ENCODE measurements at regions of chr2 and their contacts with region 1.

Region 1: DNA sequence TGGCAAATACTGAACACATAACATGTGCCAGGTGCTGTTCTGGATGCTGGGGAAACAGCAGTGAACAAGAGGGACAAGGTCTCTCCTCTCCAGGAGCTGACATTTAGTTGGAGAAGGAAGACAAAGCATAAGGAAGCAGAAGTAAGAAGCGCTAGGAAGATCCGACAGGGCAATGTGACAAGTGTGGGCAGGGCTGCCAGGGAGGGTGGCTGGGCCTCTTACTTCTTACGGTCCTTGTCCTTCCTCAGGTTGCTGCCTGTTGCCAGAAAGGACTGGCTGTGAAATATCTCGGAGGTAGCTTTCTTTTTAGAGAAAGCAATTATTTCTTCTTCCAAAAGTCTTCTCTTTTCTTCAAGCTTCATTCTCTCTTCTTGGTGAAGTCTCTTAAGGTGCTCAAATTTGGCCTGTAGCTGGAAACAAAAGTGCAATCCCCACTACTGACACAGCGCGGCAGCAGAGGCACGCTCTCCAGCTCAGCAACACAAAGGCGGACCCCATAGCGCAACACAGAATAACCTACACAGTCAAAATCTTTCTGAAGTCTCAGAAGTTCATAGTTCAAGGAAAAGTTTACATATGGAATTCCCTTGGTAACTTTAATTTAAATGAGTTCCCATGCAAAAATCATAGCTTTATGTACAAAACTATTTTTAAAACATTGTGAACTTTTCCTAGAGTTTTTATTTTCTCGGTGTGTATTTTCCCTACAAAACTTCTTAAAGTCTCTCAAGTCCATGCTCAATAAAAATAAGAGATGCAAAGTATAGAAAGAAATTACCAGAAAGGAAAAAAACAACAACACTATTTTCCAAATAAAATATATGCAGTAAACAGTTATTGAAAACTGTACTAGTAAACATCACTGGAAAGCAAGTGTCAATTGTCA is 67.7 kb downstream of the SEPTIN10 start:
- DNase-seq: peak; percentile 71
- H3K4me3 Mint-ChIP-seq: no peak overlapping the region
- H3K27ac Mint-ChIP-seq: no peak overlapping the region
- H3K4me1 Mint-ChIP-seq: no peaks in the 10 kb centered on the region
- H3K27me3 Mint-ChIP-seq: no peaks in the 10 kb centered on the region

Region 2: GRCh38 chr2:109558076-109558882 is 12.2 kb after region 1 on chr2:
- CTCF ChIA-PET with region 1: interaction called, 28 read pairs
- intact Hi-C with region 1: no loop called
- DNase-seq: peak; percentile 19
- H3K4me3 Mint-ChIP-seq: no peak overlapping the region
- H3K27ac Mint-ChIP-seq: no peak overlapping the region
- H3K4me1 Mint-ChIP-seq: peaks cover 6% of the 10 kb centered on the region
- H3K27me3 Mint-ChIP-seq: no peaks in the 10 kb centered on the region

Region 3: GRCh38 chr2:109613922-109614714 is 68.0 kb after region 1 on chr2 and contains the starts of genes SEPTIN10 and SOWAHC:
- CTCF ChIA-PET with region 1: interaction called, 5 read pairs
- intact Hi-C with region 1: loop called (anchors 10 kb)
- DNase-seq: peak; percentile 86
- H3K4me3 Mint-ChIP-seq: peak within 1 kb of the TSS; percentile 89
- H3K27ac Mint-ChIP-seq: no peak within 1 kb of the TSS
- H3K4me1 Mint-ChIP-seq: peaks cover 20% of the 10 kb centered on the region
- H3K27me3 Mint-ChIP-seq: peaks cover 64% of the 10 kb centered on the region
- total RNA-seq, gene SEPTIN10: 2.3 to 2.7 TPM
- total RNA-seq, gene SOWAHC: 0.38 to 0.44 TPM

Region 4: DNA sequence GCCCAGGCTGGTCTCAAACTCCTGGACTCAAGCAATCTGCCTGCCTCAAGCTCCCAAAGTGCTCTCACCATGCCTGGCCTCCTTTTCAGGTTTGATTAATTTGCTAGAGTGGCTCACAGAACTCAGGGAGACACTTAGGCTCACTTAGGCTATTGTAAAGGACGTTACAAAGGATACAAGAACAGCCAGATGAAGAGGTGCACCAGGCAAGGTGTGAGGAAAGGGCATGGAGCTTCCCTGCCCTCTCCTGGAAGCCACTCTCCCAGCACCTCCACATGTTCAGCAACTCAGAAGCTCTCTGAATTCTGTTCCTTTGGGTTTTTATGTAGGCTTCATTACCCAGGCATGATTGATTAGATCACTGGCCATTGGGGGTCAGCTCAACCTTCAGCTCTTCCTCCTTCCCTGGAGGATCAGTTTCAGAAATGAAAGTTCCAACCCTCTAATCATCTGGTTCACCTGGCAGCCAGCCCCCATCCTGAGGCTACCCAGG is 169.3 kb after region 1 on chr2:
- CTCF ChIA-PET with region 1: interaction called, 8 read pairs
- intact Hi-C with region 1: loop called (anchors 1 kb)
- DNase-seq: peak; percentile 14
- H3K4me3 Mint-ChIP-seq: no peak overlapping the region
- H3K27ac Mint-ChIP-seq: no peak overlapping the region
- H3K4me1 Mint-ChIP-seq: no peaks in the 10 kb centered on the region
- H3K27me3 Mint-ChIP-seq: no peaks in the 10 kb centered on the region